Esophagus muscularis mucosa (tissue), 4 donors: ENCODE measurements at regions of chr14 and their contacts with region 1.

Region 1: DNA sequence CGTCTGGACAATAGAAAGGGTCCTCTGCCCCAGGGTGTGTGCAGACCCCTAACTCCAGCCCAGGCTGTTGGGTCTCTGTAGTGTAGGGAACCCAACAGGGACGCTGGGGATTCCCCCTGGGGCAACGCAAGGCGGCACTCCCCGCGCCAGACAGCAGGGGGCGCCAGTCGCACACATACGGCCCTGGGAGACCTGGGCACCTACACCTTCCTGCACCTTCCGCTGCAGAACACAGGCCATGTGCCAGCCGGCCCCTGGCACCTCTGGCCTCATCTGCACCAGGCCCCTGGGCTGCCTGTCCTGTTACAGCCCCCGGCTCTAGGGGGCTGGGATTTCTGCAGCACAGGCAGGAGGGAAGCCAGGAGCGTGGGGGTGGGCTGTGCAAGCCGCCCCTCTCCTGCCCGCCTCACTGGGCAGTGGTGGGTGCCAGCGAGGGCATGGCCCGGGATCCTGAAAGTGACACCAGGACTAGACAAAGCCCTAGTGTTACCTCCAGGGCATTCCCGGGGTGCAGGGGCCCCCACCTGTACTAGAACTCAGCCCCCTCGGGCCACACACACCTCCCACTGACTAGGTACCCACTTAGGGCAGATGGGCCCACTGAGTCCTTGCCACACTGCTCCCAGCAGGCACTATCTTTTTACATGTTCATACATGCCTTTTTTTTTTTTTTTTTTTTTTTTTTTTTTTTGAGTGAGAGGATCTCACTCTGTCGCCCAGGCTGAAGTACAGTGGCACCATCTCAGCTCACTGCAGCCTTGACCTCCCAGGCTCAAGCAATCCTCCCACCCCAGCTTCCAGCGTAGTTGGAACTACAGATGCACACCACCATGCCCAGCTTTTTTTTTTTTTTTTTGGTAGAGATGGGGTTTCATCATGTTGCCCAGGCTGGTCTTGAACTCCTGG is 37.5 kb downstream of the CCNK start:
- DNase-seq: no peak
- H3K4me3 ChIP-seq: no peak overlapping the region
- H3K27ac ChIP-seq: peak overlapping the region in 1 of 4 donors; percentile 44
- H3K4me1 ChIP-seq: peaks cover 24 to 68% (median 38%) of the 10 kb centered on the region in 4 donors
- H3K27me3 ChIP-seq: no peaks in the 10 kb centered on the region
- CTCF ChIP-seq: peak; percentile 95 to 100 (median 98)
- EP300 ChIP-seq: no peak
- POLR2A ChIP-seq: no peak

Region 2: DNA sequence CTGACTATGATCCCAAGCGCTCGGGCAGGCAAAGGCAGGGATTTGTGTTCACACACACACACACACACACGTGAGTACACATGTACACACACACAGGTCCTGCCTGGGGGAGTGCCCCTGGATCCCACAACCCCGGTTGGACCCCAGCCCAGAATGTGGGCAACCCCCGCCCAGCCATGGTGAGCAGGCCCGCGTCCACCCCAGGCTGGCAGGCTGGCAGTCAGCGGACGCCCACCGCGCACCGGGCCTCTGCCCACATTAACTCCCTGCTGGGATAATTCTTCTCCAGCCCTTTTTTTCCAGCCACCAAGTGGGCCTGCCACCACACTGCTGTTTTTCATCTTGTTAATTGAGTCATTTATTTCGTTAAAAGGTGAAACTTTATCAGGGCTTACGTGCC is 502.9 kb before region 1 on chr14:
- intact Hi-C with region 1: no loop called
- DNase-seq: no peak
- H3K4me3 ChIP-seq: no peak overlapping the region
- H3K27ac ChIP-seq: no peak overlapping the region
- H3K4me1 ChIP-seq: no peaks in the 10 kb centered on the region
- H3K27me3 ChIP-seq: peaks cover 0 to 5% (median 0%) of the 10 kb centered on the region in 4 donors
- CTCF ChIP-seq: no peak
- EP300 ChIP-seq: no peak
- POLR2A ChIP-seq: no peak

Region 3: DNA sequence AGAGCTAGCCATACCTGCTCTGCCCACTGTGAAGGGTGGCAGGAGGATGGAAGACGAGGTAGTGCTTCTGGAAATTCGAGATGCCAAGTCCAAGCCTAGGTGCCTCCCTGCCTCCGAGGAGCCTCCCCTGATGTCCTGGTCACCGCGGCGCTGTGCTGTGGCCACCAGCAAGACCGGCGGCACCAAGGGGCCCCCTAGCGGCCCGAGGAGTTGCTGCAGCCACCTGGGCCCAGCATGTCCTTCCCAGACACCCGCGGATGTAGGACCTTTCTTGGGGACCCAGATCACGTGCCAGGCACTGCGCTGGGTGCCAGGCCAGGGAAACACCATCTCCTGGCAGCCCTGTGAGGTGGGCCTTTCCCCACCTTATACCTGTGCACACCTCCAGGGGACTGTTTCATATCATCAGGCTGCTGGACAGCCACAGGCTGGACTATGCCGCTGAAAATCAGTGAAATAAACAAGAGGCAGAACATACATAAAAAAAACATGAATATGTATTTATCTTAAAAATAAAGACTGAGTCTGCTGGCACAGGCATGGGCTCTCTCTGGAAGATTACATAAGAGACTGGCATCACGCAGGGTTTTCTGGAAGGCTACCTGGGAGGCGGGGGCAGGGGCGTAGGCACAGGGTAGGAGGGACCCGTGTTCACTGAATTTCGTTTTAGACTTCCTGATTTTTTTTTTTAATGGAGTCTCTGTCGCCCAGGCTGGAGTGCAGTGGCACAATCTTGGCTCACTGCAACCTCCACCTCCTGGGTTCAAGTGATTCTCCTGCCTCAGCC is 110.3 kb after region 1 on chr14:
- intact Hi-C with region 1: loop called (anchors 2 kb)
- DNase-seq: no peak
- H3K4me3 ChIP-seq: no peak overlapping the region
- H3K27ac ChIP-seq: no peak overlapping the region
- H3K4me1 ChIP-seq: peaks cover 7 to 13% (median 10%) of the 10 kb centered on the region in 4 donors
- H3K27me3 ChIP-seq: no peaks in the 10 kb centered on the region
- CTCF ChIP-seq: peak in 2 of 3 experiments; percentile 96 to 98
- EP300 ChIP-seq: no peak
- POLR2A ChIP-seq: no peak